HepG2 (cell line): ENCODE measurements at regions of chr7 and their contacts with region 1.

Region 1: GRCh38 chr7:974820-975681 is at the start of gene COX19:
- DNase-seq: peak; percentile 75
- ATAC-seq: peak; percentile 44
- H3K4me3 ChIP-seq: peak within 1 kb of the TSS; percentile 85 to 100 (median 98)
- H3K27ac ChIP-seq: peak within 1 kb of the TSS; percentile 100
- H3K4me1 ChIP-seq: peaks cover 71% of the 10 kb centered on the region
- H3K27me3 ChIP-seq: no peaks in the 10 kb centered on the region; a peak in 1 of 5 replicates
- CTCF ChIP-seq: peak; percentile 10; the same call in 1 of the 2 replicates
- EP300 ChIP-seq: 0 out of 4 replicates have a peak, but pooled peaks of 1 of the 2 experiments have one; percentile 43
- POLR2A ChIP-seq: peak in 1 of 2 experiments; percentile 79; a peak in 2 of 4 replicates
- RAD21 ChIP-seq: peak; percentile 44
- total RNA-seq, gene COX19: 6.5 and 11.5 TPM in 2 replicates

Region 2: GRCh38 chr7:924541-925261 is 50.4 kb before region 1 on chr7:
- CTCF ChIA-PET with region 1: no interaction called
- POLR2A ChIA-PET with region 1: interaction called, 19 read pairs
- in situ Hi-C with region 1: no loop called
- intact Hi-C with region 1: no loop called
- DNase-seq: no peak
- ATAC-seq: no peak
- H3K4me3 ChIP-seq: no peak overlapping the region
- H3K27ac ChIP-seq: no peak overlapping the region
- H3K4me1 ChIP-seq: peaks cover 61% of the 10 kb centered on the region
- H3K27me3 ChIP-seq: no peaks in the 10 kb centered on the region
- CTCF ChIP-seq: no peak
- EP300 ChIP-seq: no peak
- POLR2A ChIP-seq: no peak
- RAD21 ChIP-seq: no peak

Region 3: DNA sequence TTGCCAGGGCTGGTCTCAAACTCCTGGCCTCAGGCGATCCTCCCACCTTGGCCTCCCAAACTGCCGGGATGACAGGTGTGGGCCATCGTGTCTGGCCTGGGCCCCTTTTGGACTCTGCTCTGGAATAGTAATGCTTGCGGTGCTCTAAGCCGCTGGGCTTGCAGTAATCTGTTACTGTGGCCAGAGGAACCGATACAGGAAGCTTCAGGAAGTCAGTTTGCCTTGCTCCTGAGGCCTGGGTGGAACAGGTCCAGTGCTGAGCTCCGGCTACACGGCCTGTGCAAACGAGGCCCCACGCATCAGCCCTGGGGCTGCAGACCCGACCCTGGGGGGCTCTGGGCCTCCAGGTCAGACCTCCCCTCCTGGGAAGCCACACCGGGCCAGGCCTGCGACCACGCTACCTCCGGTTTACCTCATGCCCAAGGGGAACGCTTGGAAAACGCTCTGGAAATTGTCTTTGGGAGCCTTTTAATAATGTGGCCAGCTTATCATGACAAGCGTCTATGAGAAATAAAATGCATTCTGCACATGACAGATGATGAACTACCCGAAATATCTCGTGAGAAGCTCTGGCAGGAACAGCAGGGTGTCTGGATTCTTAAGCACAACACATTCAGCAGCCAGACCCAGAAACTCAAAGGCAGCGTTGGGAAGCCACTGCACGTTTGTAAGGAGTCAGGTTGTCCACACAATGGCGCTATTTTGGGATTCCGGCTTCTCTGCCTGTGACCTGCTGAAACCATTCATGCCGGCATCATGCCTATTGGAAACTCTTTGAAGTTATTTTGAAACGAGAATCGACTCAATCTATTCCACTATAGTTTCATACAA is 10.4 kb before region 1 on chr7:
- CTCF ChIA-PET with region 1: no interaction called
- POLR2A ChIA-PET with region 1: interaction called, 95 read pairs
- in situ Hi-C with region 1: no loop called
- intact Hi-C with region 1: no loop called
- DNase-seq: peak; percentile 64
- ATAC-seq: peak; percentile 48
- H3K4me3 ChIP-seq: peak overlapping the region in 1 of 3 experiments; percentile 72; a peak in 2 of 6 replicates
- H3K27ac ChIP-seq: peak overlapping the region; percentile 59
- H3K4me1 ChIP-seq: peaks cover 55% of the 10 kb centered on the region
- H3K27me3 ChIP-seq: no peaks in the 10 kb centered on the region
- CTCF ChIP-seq: peak; percentile 58
- EP300 ChIP-seq: no peak
- POLR2A ChIP-seq: peak in 1 of 2 experiments; percentile 64; a peak in 2 of 4 replicates
- RAD21 ChIP-seq: no peak

Region 4: GRCh38 chr7:992709-993607 is 17.9 kb after region 1 on chr7:
- CTCF ChIA-PET with region 1: interaction called, 7 read pairs
- POLR2A ChIA-PET with region 1: interaction called, 292 read pairs
- in situ Hi-C with region 1: no loop called
- intact Hi-C with region 1: loop called (anchors 1 kb)
- DNase-seq: peak; percentile 93
- ATAC-seq: peak; percentile 82
- H3K4me3 ChIP-seq: peak overlapping the region; percentile 54 to 74 (median 61); a peak in 5 of 6 replicates
- H3K27ac ChIP-seq: peak overlapping the region; percentile 91
- H3K4me1 ChIP-seq: peaks cover 35% of the 10 kb centered on the region
- H3K27me3 ChIP-seq: no peaks in the 10 kb centered on the region
- CTCF ChIP-seq: peak; percentile 100
- EP300 ChIP-seq: peak in 1 of 2 experiments; percentile 60; a peak in 2 of 4 replicates
- POLR2A ChIP-seq: peak in 1 of 2 experiments; percentile 53; a peak in 2 of 4 replicates
- RAD21 ChIP-seq: peak; percentile 100

Region 5: DNA sequence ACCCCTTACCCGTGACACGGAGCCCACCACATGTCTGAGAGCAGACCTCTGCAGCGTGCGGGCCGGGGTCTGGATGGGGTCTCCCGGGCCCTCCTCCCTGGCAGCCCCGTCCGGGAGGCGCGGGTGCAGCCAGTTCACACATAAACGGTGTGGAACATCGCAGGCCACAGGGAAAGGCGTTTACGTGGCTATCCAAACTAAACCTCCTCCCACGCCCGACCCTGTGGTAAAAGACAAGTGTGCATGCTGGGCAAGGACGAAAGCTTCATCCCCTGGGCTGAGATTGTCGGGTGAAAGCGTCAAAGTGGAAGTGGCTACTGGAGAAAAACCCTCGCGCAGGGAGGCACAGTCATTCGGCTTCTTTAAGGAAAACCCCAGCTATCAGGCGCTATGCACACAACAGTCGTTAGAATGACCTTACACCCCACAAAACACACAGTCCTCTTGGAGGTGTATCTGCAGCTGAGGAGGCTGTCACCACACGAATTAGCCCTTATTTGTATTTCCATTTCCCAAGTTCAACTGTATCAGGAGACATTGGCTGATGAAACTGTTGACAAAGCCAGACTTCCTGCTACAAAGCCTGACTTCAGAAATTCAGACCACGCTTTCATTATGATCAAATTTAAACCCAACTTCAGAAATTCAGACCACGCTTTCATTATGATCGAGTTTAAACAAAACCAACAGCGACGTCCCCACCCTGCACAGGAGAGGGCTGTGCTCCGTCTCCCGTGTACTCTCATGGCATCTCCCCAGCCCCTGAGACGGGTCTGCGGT is 128.1 kb after region 1 on chr7:
- CTCF ChIA-PET with region 1: no interaction called
- POLR2A ChIA-PET with region 1: interaction called, 13 read pairs
- in situ Hi-C with region 1: no loop called
- intact Hi-C with region 1: no loop called
- DNase-seq: peak; percentile 41
- ATAC-seq: peak; percentile 22; the same call in 2 of the 3 replicates
- H3K4me3 ChIP-seq: no peak overlapping the region
- H3K27ac ChIP-seq: no peak overlapping the region
- H3K4me1 ChIP-seq: peaks cover 34% of the 10 kb centered on the region
- H3K27me3 ChIP-seq: no peaks in the 10 kb centered on the region
- CTCF ChIP-seq: no peak
- EP300 ChIP-seq: no peak
- POLR2A ChIP-seq: no peak
- RAD21 ChIP-seq: no peak

Region 6: GRCh38 chr7:1159891-1160668 is 185.0 kb after region 1 on chr7 and contains the start of gene ZFAND2A:
- CTCF ChIA-PET with region 1: no interaction called
- POLR2A ChIA-PET with region 1: interaction called, 79 read pairs
- in situ Hi-C with region 1: no loop called
- intact Hi-C with region 1: loop called (anchors 2 kb)
- DNase-seq: peak; percentile 92
- ATAC-seq: peak; percentile 71
- H3K4me3 ChIP-seq: peak within 1 kb of the TSS; percentile 73 to 100 (median 97)
- H3K27ac ChIP-seq: peak within 1 kb of the TSS; percentile 92
- H3K4me1 ChIP-seq: peaks cover 44% of the 10 kb centered on the region
- H3K27me3 ChIP-seq: no peaks in the 10 kb centered on the region; a peak in 1 of 5 replicates
- CTCF ChIP-seq: no peak
- EP300 ChIP-seq: peak in 1 of 2 experiments; percentile 12; a peak in 1 of 4 replicates
- POLR2A ChIP-seq: peak; percentile 66 to 75
- RAD21 ChIP-seq: no peak; the same call in 1 of the 2 replicates
- total RNA-seq, gene ZFAND2A: 140 and 171 TPM in 2 replicates